ENCODE measurements at regions of chr11 and their contacts with region 1.

Region 1: GRCh38 chr11:10455637-10456487 is 798 bp downstream of the AMPD3 start:
- DNase-seq: peak; percentile 72
- H3K4me3 Mint-ChIP-seq: peak overlapping the region; percentile 86
- H3K27ac Mint-ChIP-seq: peak overlapping the region; percentile 87
- H3K4me1 Mint-ChIP-seq: peaks cover 80% of the 10 kb centered on the region
- H3K27me3 Mint-ChIP-seq: peaks cover 3% of the 10 kb centered on the region

Region 2: GRCh38 chr11:9565822-9566560 is 889.9 kb before region 1 on chr11:
- intact Hi-C with region 1: loop called (anchors 5 kb)
- DNase-seq: peak; percentile 67
- H3K4me3 Mint-ChIP-seq: peak overlapping the region; percentile 13
- H3K27ac Mint-ChIP-seq: peak overlapping the region; percentile 82
- H3K4me1 Mint-ChIP-seq: peaks cover 37% of the 10 kb centered on the region
- H3K27me3 Mint-ChIP-seq: peaks cover 4% of the 10 kb centered on the region

Region 3: GRCh38 chr11:10293423-10294289 is 162.2 kb before region 1 on chr11 and contains the start of gene SBF2:
- intact Hi-C with region 1: loop called (anchors 5 kb)
- DNase-seq: peak; percentile 69
- H3K4me3 Mint-ChIP-seq: peak within 1 kb of the TSS; percentile 80
- H3K27ac Mint-ChIP-seq: peak within 1 kb of the TSS; percentile 64
- H3K4me1 Mint-ChIP-seq: peaks cover 31% of the 10 kb centered on the region
- H3K27me3 Mint-ChIP-seq: peaks cover 61% of the 10 kb centered on the region
- total RNA-seq, gene SBF2: 5.3 and 5.4 TPM in 2 replicates

Region 4: GRCh38 chr11:10441652-10442503 is 14.0 kb before region 1 on chr11:
- intact Hi-C with region 1: loop called (anchors 1 kb)
- DNase-seq: peak; percentile 29
- H3K4me3 Mint-ChIP-seq: peak overlapping the region; percentile 4
- H3K27ac Mint-ChIP-seq: peak overlapping the region; percentile 77
- H3K4me1 Mint-ChIP-seq: peaks cover 21% of the 10 kb centered on the region
- H3K27me3 Mint-ChIP-seq: peaks cover 12% of the 10 kb centered on the region

Region 5: DNA sequence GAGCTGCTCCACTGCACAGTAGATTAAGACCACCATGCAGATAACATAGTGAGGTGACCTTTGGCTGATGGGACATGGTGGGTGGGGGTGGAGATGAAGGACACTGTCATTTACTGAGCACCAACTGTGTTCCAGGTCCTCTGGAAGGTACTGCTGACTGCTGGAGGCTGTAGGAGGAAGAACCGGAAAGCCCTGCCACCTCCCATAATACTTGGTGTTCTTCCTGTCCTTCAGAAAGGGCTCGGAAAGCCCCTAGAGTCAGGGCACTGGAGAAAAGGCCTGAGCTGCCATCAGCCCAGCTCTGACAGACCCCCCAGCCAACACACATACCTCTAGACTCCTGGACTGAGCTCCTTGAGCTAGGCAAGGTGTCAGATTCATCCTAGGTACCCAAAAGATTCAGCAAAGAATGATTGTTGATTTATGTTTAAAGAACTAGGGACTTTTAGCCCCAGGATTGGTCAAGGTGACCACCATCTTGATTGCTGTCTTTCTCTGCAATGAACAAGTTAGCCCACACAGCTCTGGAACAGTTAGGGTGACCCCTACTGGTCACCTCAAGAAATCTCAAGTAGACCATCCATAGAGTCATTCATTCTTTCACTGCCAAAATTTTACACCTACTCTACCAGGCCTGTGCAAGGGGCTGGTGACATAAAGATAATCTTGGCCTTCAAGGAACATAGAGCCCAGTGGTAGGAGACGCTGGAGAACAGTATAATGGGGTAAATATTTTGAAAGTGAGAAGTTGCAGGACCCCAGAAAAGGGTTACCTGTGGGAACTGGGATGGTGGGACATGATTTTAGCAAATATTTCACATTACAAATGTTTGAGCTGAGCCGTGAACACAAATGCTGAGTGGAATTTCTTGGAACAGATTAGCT is 198.3 kb after region 1 on chr11:
- intact Hi-C with region 1: loop called (anchors 5 kb)
- DNase-seq: peak; percentile 16
- H3K4me3 Mint-ChIP-seq: no peak overlapping the region
- H3K27ac Mint-ChIP-seq: no peak overlapping the region
- H3K4me1 Mint-ChIP-seq: peaks cover 33% of the 10 kb centered on the region
- H3K27me3 Mint-ChIP-seq: peaks cover 2% of the 10 kb centered on the region

Region 6: GRCh38 chr11:10750838-10751580 is 295.1 kb after region 1 on chr11 and contains the start of gene CTR9:
- intact Hi-C with region 1: loop called (anchors 2 kb)
- DNase-seq: peak; percentile 92
- H3K4me3 Mint-ChIP-seq: peak within 1 kb of the TSS; percentile 96
- H3K27ac Mint-ChIP-seq: peak within 1 kb of the TSS; percentile 87
- H3K4me1 Mint-ChIP-seq: peaks cover 38% of the 10 kb centered on the region
- H3K27me3 Mint-ChIP-seq: no peaks in the 10 kb centered on the region
- total RNA-seq, gene CTR9: 46.2 and 51.1 TPM in 2 replicates

Region 7: GRCh38 chr11:10857709-10858438 is 402.0 kb after region 1 on chr11 and contains the start of gene ZBED5:
- intact Hi-C with region 1: loop called (anchors 5 kb)
- DNase-seq: peak; percentile 94
- H3K4me3 Mint-ChIP-seq: peak within 1 kb of the TSS; percentile 100
- H3K27ac Mint-ChIP-seq: peak within 1 kb of the TSS; percentile 100
- H3K4me1 Mint-ChIP-seq: peaks cover 46% of the 10 kb centered on the region
- H3K27me3 Mint-ChIP-seq: no peaks in the 10 kb centered on the region
- total RNA-seq, gene ZBED5: 38.9 and 42.2 TPM in 2 replicates

Measured in activated T-helper 1 cell treated with anti-CD3 and anti-CD28 coated beads, Interleukin-12 subunit alpha, Interleukin-12 subunit beta, Interleukin-2, Interleukin-4 antibody, amounts not matched to agents 30 ng/mL and 10 ng/mL and 1 ng/mL, durations not matched to agents 14 hours and 24 hours and 36 hours (primary cell).